ENCODE measurements at regions of chr15 and their contacts with region 1.

Region 1: GRCh38 chr15:31435261-31435911 is 108.8 kb downstream of the KLF13 start:
- DNase-seq: peak; percentile 91
- H3K4me3 ChIP-seq: no peak overlapping the region
- H3K27ac ChIP-seq: no peak overlapping the region; a peak in 1 of 4 replicates
- H3K4me1 ChIP-seq: peaks cover 0 to 20% of the 10 kb centered on the region in 2 experiments; a peak in 1 of 4 replicates
- H3K27me3 ChIP-seq: no peaks in the 10 kb centered on the region; the same call in 1 of the 2 replicates
- CTCF ChIP-seq: peak; percentile 66
- EP300 ChIP-seq: no peak
- RAD21 ChIP-seq: peak; percentile 94

Region 2: DNA sequence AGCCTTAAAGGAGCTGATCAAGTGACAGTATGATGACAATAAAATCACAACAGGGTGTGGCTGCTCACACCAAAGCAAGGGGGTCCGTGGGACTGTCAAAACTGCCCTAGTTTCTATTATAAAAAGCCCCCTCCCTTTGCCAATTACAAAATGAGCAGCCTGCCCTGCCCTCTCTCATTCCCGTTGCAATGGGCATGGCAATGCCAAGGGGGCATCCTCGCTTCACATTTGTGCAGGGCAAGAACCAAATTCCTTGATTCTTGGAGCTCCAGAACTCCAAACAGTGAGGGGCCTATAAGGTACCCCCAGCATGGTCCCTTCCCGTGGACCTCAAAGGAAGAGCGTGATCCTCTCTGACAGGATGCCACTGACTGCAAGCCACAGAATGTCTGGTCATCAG is 229.0 kb before region 1 on chr15:
- CTCF ChIA-PET with region 1: interaction called, 19 read pairs
- POLR2A ChIA-PET with region 1: no interaction called
- DNase-seq: peak; percentile 52
- H3K4me3 ChIP-seq: no peak overlapping the region
- H3K27ac ChIP-seq: no peak overlapping the region
- H3K4me1 ChIP-seq: peaks cover 0 to 7% of the 10 kb centered on the region in 2 experiments; a peak in 1 of 4 replicates
- H3K27me3 ChIP-seq: peaks cover 8% of the 10 kb centered on the region; the same call in 1 of the 2 replicates
- CTCF ChIP-seq: peak; percentile 27; the same call in 1 of the 2 replicates
- EP300 ChIP-seq: no peak
- RAD21 ChIP-seq: peak; percentile 76

Region 3: GRCh38 chr15:31352911-31353811 is 82.2 kb before region 1 on chr15:
- CTCF ChIA-PET with region 1: interaction called, 14 read pairs
- POLR2A ChIA-PET with region 1: no interaction called
- DNase-seq: peak; percentile 81
- H3K4me3 ChIP-seq: peak overlapping the region in 1 of 2 experiments; percentile 43; a peak in 2 of 4 replicates
- H3K27ac ChIP-seq: peak overlapping the region; percentile 94 to 95
- H3K4me1 ChIP-seq: peaks cover 24 to 90% of the 10 kb centered on the region in 2 experiments
- H3K27me3 ChIP-seq: no peaks in the 10 kb centered on the region
- CTCF ChIP-seq: no peak
- EP300 ChIP-seq: peak; percentile 70 to 91; a peak in 3 of 4 replicates
- RAD21 ChIP-seq: peak; percentile 40

Region 4: GRCh38 chr15:31387479-31388118 is 47.8 kb before region 1 on chr15:
- CTCF ChIA-PET with region 1: interaction called, 16 read pairs
- POLR2A ChIA-PET with region 1: no interaction called
- DNase-seq: peak; percentile 86
- H3K4me3 ChIP-seq: no peak overlapping the region
- H3K27ac ChIP-seq: peak overlapping the region in 1 of 2 experiments; percentile 71; a peak in 2 of 4 replicates
- H3K4me1 ChIP-seq: peaks cover 0 to 16% of the 10 kb centered on the region in 2 experiments; a peak in 2 of 4 replicates
- H3K27me3 ChIP-seq: no peaks in the 10 kb centered on the region
- CTCF ChIP-seq: no peak
- EP300 ChIP-seq: peak in 1 of 2 experiments; percentile 93; a peak in 2 of 4 replicates
- RAD21 ChIP-seq: peak; percentile 22; the same call in 1 of the 2 replicates

Region 5: GRCh38 chr15:31402511-31403056 is 32.8 kb before region 1 on chr15:
- CTCF ChIA-PET with region 1: interaction called, 28 read pairs
- POLR2A ChIA-PET with region 1: interaction called, 5 read pairs
- DNase-seq: peak; percentile 74
- H3K4me3 ChIP-seq: no peak overlapping the region
- H3K27ac ChIP-seq: peak overlapping the region in 1 of 2 experiments; percentile 85; a peak in 2 of 4 replicates
- H3K4me1 ChIP-seq: peaks cover 0 to 58% of the 10 kb centered on the region in 2 experiments; a peak in 1 of 4 replicates
- H3K27me3 ChIP-seq: no peaks in the 10 kb centered on the region
- CTCF ChIP-seq: no peak
- EP300 ChIP-seq: peak in 1 of 2 experiments; percentile 71; a peak in 2 of 4 replicates
- RAD21 ChIP-seq: no peak; the same call in 1 of the 2 replicates